Panc1 (cell line): ENCODE measurements at regions of chr3 and their contacts with region 1.

Region 1: DNA sequence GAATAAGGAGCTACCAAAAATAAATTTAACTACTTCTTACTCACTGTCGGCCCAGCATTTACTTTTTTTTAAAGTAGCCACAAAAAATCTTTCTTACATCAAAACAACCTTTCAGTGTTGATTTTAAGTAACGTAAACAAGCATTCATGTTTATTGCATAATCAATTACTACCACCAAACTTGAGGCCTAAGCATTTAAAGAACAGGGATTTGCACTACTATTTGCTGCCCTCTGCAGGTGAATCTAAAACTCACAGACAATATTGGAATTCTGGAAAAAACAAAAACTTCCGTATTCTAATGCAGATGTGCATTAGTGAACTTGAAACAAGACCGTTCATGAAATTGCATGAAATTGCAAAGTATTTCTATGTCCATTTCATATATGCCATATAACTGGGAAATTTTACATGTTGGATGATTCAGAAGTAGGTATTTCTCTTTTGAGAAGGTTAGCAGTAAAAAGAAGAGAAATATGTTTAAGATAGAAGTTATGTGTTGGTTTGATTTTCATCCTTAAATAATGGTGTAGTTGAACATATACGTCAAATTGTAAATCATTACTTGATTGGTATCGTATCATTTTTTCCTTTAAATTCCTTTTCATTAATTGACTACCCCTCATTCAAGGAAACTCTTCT is 55.6 kb downstream of the CGGBP1 start:
- DNase-seq: no peak
- ATAC-seq: no peak
- H3K4me3 ChIP-seq: no peak overlapping the region
- H3K27ac ChIP-seq: no peak overlapping the region; the same call in 1 of the 2 replicates
- H3K4me1 ChIP-seq: no peaks in the 10 kb centered on the region; the same call in 1 of the 2 replicates
- H3K27me3 ChIP-seq: no peaks in the 10 kb centered on the region
- CTCF ChIP-seq: peak; percentile 66; the same call in 1 of the 2 replicates

Region 2: GRCh38 chr3:87088993-87089841 is 914.0 kb before region 1 on chr3:
- CTCF ChIA-PET with region 1: no interaction called
- POLR2A ChIA-PET with region 1: no interaction called
- in situ Hi-C with region 1: no loop called
- intact Hi-C with region 1: loop called (anchors 5 kb)
- DNase-seq: peak; percentile 28
- ATAC-seq: peak; percentile 97
- H3K4me3 ChIP-seq: peak overlapping the region; percentile 61 to 79
- H3K27ac ChIP-seq: peak overlapping the region; percentile 90
- H3K4me1 ChIP-seq: peaks cover 8% of the 10 kb centered on the region; the same call in 1 of the 2 replicates
- H3K27me3 ChIP-seq: no peaks in the 10 kb centered on the region
- CTCF ChIP-seq: no peak

Region 3: DNA sequence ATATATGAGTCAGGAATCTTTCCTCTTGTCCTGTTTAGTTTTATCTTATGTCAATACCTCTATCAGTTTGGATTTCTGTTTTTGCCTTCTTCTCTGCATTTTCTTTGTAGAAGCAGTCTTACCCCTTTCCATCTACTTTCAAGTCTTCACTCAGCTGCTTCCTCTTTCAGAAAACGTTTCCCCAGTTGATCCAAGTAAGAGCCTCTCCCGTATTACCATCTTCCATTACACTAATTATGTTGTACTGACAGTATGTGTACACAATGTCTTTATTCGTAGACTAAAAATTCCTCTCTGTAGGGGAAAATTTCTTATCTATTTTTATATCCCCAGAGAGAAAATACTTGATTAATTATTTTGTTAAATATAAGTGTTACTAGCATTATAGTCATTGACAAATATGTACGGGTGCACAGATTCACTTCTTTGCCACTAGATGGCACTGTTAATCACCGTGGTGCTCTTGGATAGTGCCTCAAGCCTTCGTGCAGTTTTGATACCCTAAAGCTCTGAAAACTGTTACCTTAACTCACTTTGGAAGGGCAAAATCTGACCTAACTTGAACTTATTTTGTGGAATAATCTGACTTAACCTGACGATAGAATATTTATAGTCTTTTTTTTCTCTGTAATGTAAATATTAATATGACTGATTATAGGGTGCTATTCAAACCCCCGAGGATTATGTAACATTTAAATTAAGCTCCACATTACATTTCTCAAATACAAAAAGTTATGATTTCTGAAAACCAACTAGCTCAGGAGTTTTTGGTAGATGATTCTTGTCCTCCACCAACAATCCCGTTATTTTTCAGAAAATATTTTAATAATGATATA is 652.7 kb before region 1 on chr3:
- CTCF ChIA-PET with region 1: no interaction called
- POLR2A ChIA-PET with region 1: no interaction called
- in situ Hi-C with region 1: no loop called
- intact Hi-C with region 1: loop called (anchors 2 kb)
- DNase-seq: peak; percentile 33
- ATAC-seq: peak; percentile 91
- H3K4me3 ChIP-seq: no peak overlapping the region
- H3K27ac ChIP-seq: peak overlapping the region; percentile 77
- H3K4me1 ChIP-seq: peaks cover 2% of the 10 kb centered on the region; the same call in 1 of the 2 replicates
- H3K27me3 ChIP-seq: no peaks in the 10 kb centered on the region
- CTCF ChIP-seq: peak; percentile 75; the same call in 1 of the 2 replicates

Region 4: GRCh38 chr3:87855616-87856015 is 147.6 kb before region 1 on chr3:
- CTCF ChIA-PET with region 1: no interaction called
- POLR2A ChIA-PET with region 1: no interaction called
- in situ Hi-C with region 1: no loop called
- intact Hi-C with region 1: no loop called
- DNase-seq: no peak
- ATAC-seq: no peak
- H3K4me3 ChIP-seq: no peak overlapping the region
- H3K27ac ChIP-seq: no peak overlapping the region
- H3K4me1 ChIP-seq: no peaks in the 10 kb centered on the region
- H3K27me3 ChIP-seq: no peaks in the 10 kb centered on the region
- CTCF ChIP-seq: no peak

Region 5: DNA sequence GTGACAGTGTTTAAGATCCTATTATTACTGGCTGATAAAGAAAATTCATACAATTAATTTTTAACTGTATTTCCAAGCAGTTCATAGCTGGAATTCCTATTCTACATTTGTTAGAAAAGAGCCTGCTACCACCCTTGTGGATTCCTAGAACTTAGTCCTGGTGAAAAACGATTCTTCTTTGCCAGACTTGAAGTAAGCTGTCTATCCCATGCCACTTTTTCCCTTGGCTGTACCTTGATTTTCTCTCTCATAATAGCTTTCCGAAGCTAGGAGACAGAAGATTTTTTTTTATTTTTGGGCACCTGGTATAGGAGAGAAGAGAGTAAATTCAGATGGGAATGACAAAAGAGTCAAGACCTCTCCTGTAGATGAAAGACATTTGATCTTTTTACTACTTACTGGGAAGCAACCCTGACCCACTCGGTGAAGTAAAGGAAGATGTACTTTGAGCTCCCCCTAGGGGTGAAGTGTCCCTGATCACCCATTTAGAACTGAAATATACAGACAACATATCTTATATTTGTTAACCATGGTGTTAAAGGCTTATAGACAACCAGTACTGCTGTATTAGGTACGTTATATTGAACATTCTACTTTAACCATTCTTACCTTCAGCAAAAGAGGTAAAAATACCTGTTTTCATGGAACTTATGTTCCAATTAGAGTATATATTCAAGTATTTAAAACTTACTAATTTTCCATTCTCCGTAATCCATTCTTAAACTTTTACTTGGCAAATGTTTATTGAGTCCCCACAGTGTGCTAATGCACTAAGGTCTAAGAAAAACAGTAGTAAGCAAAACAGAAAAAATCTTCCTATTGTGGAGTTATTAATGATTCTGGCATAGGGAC is 110.3 kb after region 1 on chr3:
- CTCF ChIA-PET with region 1: no interaction called
- POLR2A ChIA-PET with region 1: no interaction called
- in situ Hi-C with region 1: no loop called
- intact Hi-C with region 1: loop called (anchors 5 kb)
- DNase-seq: peak; percentile 32
- ATAC-seq: peak; percentile 91
- H3K4me3 ChIP-seq: no peak overlapping the region
- H3K27ac ChIP-seq: no peak overlapping the region
- H3K4me1 ChIP-seq: no peaks in the 10 kb centered on the region
- H3K27me3 ChIP-seq: no peaks in the 10 kb centered on the region
- CTCF ChIP-seq: peak; percentile 71; the same call in 1 of the 2 replicates